ENCODE measurements at regions of chr6 and their contacts with region 1.

Region 1: DNA sequence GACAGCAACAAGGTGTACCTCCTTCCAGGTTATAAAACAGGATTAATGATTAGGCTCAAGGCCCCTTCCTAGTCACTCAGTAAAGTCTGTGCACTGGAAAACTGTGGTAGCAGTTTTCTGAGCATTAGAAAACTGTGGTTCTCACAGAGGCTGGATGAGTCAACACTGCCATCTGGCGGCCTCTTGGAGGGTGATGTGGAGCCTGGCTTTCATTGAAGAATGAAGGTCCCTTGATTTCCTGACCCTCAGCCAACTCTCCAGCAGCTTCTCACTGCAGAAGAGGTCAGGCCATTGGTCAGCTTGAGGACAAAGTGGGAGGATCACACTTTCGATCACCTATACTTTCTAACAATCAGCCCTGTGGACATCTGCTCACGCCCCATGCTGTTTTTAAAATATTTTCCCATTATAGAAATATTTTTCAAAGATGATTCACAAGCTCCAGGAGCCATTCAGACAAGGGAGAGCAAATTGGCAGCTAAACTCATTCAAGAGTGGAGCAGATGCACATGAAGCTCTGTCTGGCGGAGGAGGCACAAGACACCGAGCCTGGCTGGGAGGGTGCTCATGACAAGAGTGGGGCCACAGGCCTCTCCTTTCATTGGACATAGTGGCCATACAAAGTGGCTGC is 23.2 kb downstream of the PSMB1 start:
- DNase-seq: peak; percentile 80
- ATAC-seq: peak; percentile 76
- H3K4me3 Mint-ChIP-seq: no peak overlapping the region
- H3K27ac Mint-ChIP-seq: no peak overlapping the region
- H3K4me1 Mint-ChIP-seq: peaks cover 12% of the 10 kb centered on the region
- H3K27me3 Mint-ChIP-seq: peaks cover 14% of the 10 kb centered on the region

Region 2: GRCh38 chr6:169789982-169790927 is 739.7 kb before region 1 on chr6:
- CTCF ChIA-PET with region 1: interaction called, 26 read pairs
- POLR2A ChIA-PET with region 1: no interaction called
- DNase-seq: peak; percentile 76
- ATAC-seq: peak; percentile 97
- H3K4me3 Mint-ChIP-seq: peak overlapping the region; percentile 67
- H3K27ac Mint-ChIP-seq: no peak overlapping the region
- H3K4me1 Mint-ChIP-seq: peaks cover 14% of the 10 kb centered on the region
- H3K27me3 Mint-ChIP-seq: peaks cover 54% of the 10 kb centered on the region

Region 3: GRCh38 chr6:169800668-169801395 is 729.1 kb before region 1 on chr6:
- CTCF ChIA-PET with region 1: interaction called, 10 read pairs
- POLR2A ChIA-PET with region 1: no interaction called
- DNase-seq: no peak
- ATAC-seq: no peak
- H3K4me3 Mint-ChIP-seq: no peak overlapping the region
- H3K27ac Mint-ChIP-seq: no peak overlapping the region
- H3K4me1 Mint-ChIP-seq: peaks cover 31% of the 10 kb centered on the region
- H3K27me3 Mint-ChIP-seq: peaks cover 66% of the 10 kb centered on the region

Region 4: DNA sequence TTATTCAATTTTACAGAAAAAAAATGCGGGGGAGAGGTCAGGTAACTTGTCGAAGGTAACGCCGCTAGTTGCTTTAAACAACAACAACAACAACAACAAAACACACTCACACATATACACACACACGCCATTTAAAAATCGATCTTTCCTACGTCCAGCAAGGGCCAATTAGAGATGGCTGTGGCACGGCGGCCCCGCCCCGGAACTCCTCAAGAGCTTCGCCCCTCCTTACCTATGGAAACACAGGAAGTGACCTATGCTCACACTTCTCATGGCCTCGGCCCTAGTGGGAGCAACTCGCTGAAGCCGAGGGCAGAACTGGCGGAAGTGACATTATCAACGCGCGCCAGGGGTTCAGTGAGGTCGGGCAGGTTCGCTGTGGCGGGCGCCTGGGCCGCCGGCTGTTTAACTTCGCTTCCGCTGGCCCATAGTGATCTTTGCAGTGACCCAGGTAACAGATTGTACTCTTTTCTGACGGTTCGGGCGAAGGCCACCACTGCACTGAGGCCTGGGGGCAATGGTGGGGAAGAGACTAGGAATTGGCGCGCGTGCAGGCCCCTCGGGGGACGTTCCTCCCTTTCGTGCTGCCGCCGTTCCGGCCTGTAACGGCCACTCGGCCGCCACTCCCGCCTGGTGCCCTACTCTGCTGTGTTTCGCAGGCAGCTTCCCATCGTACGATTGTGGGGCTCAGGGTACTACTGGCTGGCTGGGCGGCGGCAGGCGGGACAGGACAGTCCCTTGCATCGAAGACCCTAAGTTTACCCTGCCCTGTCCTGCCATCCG is 24.2 kb after region 1 on chr6 and contains the start of gene TBP:
- CTCF ChIA-PET with region 1: interaction called, 14 read pairs
- POLR2A ChIA-PET with region 1: no interaction called
- DNase-seq: peak; percentile 99
- ATAC-seq: peak; percentile 95
- H3K4me3 Mint-ChIP-seq: no peak within 1 kb of the TSS
- H3K27ac Mint-ChIP-seq: no peak within 1 kb of the TSS
- H3K4me1 Mint-ChIP-seq: peaks cover 35% of the 10 kb centered on the region
- H3K27me3 Mint-ChIP-seq: no peaks in the 10 kb centered on the region
- total RNA-seq, gene TBP: 20.0 to 21.5 TPM

Measured in activated CD8-positive, alpha-beta T cell treated with anti-CD3 and anti-CD28 coated beads, Interleukin-2, amount 10 ng/mL, durations not matched to agents 7 days and 5 days (primary cell).